Sigmoid colon (tissue), 7 donors: ENCODE measurements at regions of chr7 and their contacts with region 1.

Region 1: DNA sequence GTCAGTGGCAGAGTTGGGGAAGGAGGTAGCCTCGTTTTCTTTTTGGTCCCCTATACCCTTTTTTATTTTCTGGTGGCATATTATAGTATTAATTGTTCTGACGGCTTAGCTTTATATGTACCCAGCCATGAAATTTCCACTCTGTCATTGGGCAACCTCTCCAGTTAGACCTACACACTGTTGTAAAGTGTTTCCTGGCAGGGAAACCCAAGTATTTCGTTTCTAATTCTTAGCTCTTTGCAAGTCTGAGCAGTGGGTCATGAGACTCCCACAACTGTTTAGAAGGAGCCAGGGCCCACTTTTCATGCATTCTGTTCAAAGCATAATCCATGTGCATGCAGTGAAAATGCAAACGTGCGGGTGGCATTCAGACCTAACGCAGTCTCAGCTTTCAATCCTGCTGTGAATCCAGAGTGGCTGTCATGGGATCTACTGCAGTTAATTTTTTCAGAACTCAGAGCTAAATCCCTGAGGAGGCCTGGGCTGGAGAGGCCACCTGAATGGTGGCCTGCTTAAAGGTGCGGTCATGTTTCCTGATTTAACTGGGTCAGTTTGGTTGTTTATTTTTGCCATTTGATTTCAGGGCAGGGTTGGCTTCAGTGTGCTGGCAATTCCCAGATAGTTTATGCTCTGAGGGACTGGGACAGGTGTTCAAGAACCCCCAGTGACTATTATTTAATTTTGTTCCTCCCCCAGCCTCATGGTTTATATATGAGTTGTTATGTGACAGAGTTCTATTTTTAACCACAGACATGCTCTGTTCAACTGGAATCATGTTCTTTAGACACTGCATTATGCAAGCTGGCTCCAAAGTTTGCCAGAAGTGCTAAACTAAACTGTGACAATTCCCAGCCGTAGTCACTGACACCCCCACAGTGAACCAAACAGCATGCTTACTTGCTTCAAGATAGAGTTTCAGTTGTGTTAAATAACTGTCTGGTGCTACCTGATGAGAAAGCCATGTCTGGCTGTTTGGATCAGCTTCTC is 27.4 kb upstream of the SYPL1 start:
- DNase-seq: peak; percentile 92
- H3K4me3 ChIP-seq: no peak overlapping the region
- H3K27ac ChIP-seq: peak overlapping the region; percentile 68 to 89 (median 82)
- H3K4me1 ChIP-seq: peaks cover 0 to 26% (median 25%) of the 10 kb centered on the region in 4 donors
- H3K27me3 ChIP-seq: no peaks in the 10 kb centered on the region
- CTCF ChIP-seq: no peak
- EP300 ChIP-seq: peak; percentile 73 to 93 (median 82)
- POLR2A ChIP-seq: no peak

Region 2: DNA sequence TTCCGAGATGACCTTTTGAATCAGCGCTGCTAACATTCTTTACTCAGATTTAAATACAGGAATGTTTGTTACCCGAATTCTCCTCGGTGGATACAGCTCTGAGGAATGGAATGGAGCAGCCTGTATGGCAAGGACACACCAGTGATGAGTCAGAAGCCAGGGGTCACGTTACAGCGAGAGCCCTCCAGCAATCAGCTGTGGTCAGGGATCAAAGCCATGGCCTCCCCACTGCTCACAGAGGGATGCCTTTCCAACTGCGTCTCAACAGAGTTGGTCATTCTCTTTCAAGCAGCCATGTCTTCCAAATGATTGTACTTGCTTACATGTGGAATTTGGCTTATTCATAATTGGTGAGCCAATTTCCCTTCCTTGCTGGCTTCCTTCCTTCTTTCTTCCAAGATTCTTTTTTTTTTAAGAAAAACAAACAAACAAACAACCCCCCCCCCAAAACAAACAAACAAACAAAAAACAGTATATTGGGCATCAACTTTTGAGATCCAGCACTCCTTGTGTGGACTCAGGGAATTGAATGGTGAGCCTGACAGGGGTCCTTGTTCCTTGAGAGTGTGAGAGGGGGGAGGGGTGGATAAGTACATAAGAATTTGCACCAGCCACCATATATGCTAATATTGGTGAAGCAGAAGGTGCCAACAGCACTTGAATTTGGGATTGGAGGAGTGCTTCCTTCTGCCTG is 363.4 kb before region 1 on chr7:
- intact Hi-C with region 1: loop called (anchors 10 kb)
- DNase-seq: peak; percentile 85
- H3K4me3 ChIP-seq: no peak overlapping the region
- H3K27ac ChIP-seq: peak overlapping the region in 3 of 4 donors; percentile 53 to 65 (median 64)
- H3K4me1 ChIP-seq: peaks cover 0 to 51% (median 40%) of the 10 kb centered on the region in 4 donors
- H3K27me3 ChIP-seq: no peaks in the 10 kb centered on the region
- CTCF ChIP-seq: no peak
- EP300 ChIP-seq: no peak
- POLR2A ChIP-seq: no peak